ENCODE measurements at regions of chr3 and their contacts with region 1.

Region 1: DNA sequence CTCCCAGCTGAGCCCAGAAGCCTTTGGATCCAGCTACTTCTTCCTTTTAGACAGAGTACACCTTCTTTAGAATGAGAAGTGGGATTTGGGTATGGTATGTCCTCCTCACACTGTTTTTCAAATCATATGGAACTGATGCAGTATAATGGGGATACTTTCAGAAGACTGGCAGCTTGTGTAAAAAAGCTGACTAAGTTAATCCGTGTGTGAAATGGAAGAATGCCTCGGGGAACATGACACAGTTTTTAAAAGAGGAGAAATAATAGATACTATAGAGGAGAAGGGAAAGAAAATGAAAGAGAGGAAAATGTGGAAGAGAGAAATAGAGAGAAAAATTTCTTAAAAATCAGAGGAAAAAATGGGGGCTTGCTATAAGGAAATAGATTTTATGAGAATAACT is 47.7 kb downstream of the TUSC7 start:
- DNase-seq: no peak
- H3K4me3 Mint-ChIP-seq: no peak overlapping the region
- H3K27ac Mint-ChIP-seq: no peak overlapping the region
- H3K4me1 Mint-ChIP-seq: no peaks in the 10 kb centered on the region
- H3K27me3 Mint-ChIP-seq: no peaks in the 10 kb centered on the region

Region 2: DNA sequence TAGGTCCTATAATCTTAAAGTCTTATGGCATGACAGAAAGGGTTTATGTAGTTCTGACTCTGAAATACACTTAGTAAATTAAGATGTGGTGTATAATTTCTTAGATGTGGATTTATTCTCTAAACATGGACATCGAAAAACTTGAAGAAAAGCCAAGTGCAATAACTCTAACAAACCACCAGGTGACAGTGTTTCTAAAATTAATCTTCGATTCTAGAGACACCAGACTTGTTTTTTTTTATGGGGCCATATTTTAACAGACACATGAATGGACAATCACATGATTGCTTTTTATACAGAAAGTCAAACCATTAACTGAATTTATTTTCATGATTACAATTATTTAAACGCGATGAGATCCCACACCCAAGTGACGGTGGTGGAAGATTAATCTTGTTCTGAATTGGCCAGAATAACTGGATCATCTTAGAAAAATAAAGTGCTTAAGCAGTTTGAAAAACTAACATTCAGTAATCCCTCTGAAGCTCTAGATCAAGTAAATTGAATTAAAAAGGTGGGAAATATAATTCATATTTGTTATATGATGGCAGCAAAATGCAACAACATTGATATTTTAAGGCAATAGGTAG is 617.1 kb before region 1 on chr3:
- CTCF ChIA-PET with region 1: interaction called, 4 read pairs
- POLR2A ChIA-PET with region 1: no interaction called
- intact Hi-C with region 1: loop called (anchors 1 kb)
- DNase-seq: no peak
- H3K4me3 Mint-ChIP-seq: no peak overlapping the region
- H3K27ac Mint-ChIP-seq: no peak overlapping the region
- H3K4me1 Mint-ChIP-seq: no peaks in the 10 kb centered on the region
- H3K27me3 Mint-ChIP-seq: no peaks in the 10 kb centered on the region

Region 3: DNA sequence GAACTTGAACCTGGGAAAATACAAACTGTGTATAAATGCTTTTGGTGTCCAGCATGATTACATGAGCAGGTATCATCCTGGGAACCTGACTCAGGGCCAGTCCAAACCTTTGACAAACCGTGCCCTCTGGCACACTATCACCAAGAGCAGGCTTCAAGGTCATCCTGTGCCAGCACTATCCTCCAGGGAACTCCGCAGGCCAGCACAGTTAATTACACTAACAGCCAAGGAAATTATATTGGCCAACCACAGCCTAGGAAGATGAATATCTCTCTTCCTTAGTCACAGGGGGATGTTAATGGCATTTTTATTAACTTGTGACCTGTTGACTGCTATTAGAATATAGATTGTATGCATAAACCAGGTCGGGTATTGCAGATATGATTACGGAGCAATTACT is 214.2 kb after region 1 on chr3:
- CTCF ChIA-PET with region 1: no interaction called
- POLR2A ChIA-PET with region 1: no interaction called
- intact Hi-C with region 1: no loop called
- DNase-seq: no peak
- H3K4me3 Mint-ChIP-seq: no peak overlapping the region
- H3K27ac Mint-ChIP-seq: no peak overlapping the region
- H3K4me1 Mint-ChIP-seq: no peaks in the 10 kb centered on the region
- H3K27me3 Mint-ChIP-seq: no peaks in the 10 kb centered on the region

Measured in activated CD4-positive, alpha-beta memory T cell treated with anti-CD3 and anti-CD28 coated beads for 36 hours (primary cell).